Esophagus muscularis mucosa (tissue), 4 donors: ENCODE measurements at regions of chr5 and their contacts with region 1.

Region 1: DNA sequence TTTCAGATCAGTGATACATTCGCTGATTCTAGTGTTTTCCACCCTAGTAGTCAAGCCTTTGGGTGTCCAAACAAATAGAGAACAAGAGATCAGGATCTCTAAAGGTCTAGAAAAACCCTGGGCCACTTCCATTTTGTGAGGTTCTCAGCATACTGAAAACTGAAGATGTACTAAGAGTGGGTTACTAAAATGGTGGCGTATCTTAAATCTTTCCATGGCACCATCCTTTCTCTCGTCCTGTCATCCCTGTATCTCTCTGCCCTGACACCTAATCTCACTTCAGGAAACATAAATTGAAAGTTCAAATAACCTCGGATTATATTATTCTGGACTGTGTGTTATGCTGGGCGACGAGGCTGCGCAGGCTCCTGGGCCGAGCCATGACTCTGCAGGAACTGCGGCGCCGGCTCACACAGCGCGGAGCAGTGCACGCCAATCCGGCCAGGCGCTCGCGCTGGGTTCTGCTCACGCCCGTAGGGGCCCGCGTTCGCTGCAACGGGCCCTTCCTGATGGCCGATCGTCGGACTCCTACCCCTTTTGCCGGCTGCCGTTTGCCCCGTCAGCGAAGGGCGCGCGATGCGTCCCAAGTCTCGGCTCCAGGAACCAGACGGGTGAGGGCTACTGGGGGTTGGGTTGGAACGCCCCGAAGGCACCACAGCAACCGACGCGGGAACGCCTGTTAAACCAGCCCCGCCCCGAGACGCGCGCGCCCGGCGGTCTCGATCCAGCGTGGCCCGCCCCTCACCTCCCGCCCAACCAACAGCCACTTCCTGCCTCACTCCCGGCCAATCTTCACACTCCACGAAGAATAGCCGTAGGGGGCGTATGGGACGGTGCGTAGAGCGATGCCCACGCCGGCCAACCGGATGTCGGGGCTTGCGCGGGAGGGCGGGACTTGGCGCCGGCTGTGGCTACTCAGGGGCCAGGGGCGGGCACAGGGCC is 503 bp upstream of the CANX start:
- DNase-seq: peak; percentile 100
- H3K4me3 ChIP-seq: peak overlapping the region; percentile 86 to 94 (median 88)
- H3K27ac ChIP-seq: peak overlapping the region; percentile 93 to 97 (median 96)
- H3K4me1 ChIP-seq: peaks cover 27 to 54% (median 45%) of the 10 kb centered on the region in 4 donors
- H3K27me3 ChIP-seq: no peaks in the 10 kb centered on the region
- CTCF ChIP-seq: no peak
- EP300 ChIP-seq: no peak
- POLR2A ChIP-seq: peak; percentile 91

Region 2: DNA sequence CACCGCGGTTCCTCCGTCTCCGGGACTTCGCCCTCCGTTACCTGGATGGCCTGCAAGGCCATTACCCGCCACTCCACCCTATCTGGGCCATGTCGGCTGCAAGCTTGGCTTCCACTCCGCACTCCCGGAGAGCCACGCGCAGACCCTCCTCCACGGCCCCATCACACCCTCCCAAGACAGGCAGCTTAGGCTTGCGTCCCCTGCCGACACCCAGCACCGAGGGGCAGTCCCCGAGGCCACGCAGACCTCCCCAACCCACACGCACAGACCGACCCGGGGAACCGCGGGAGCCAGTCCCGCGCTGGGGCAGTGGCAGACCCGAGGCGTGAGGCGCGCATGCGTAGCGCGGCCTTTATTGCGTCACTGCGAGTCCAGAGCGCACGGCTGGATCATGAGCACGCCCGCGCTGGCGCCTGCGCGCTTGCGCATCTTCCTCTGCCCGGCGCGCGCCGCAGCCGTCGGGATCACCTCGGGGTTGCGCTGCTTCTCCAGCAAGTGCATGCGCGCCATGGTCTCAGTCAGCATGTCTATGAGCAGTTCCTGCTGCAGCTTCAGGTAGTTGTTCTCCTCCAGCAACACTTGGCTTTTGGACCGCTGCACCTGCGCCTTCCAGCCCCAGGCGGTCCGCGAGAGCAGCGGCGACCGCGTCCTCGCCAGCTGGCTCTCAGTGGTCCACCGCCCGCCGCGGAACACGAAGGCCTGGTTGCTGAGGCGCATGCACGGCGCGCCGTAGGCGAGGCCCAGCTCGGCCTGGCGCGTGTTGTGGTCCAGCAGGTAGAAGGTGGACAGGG is 19.8 kb before region 1 on chr5:
- intact Hi-C with region 1: loop called (anchors 2 kb)
- DNase-seq: peak; percentile 98
- H3K4me3 ChIP-seq: peak overlapping the region; percentile 69 to 95 (median 84)
- H3K27ac ChIP-seq: peak overlapping the region; percentile 90 to 96 (median 92)
- H3K4me1 ChIP-seq: peaks cover 15 to 32% (median 29%) of the 10 kb centered on the region in 4 donors
- H3K27me3 ChIP-seq: no peaks in the 10 kb centered on the region
- CTCF ChIP-seq: peak in 1 of 3 experiments; percentile 40
- EP300 ChIP-seq: no peak
- POLR2A ChIP-seq: peak; percentile 84

Region 3: DNA sequence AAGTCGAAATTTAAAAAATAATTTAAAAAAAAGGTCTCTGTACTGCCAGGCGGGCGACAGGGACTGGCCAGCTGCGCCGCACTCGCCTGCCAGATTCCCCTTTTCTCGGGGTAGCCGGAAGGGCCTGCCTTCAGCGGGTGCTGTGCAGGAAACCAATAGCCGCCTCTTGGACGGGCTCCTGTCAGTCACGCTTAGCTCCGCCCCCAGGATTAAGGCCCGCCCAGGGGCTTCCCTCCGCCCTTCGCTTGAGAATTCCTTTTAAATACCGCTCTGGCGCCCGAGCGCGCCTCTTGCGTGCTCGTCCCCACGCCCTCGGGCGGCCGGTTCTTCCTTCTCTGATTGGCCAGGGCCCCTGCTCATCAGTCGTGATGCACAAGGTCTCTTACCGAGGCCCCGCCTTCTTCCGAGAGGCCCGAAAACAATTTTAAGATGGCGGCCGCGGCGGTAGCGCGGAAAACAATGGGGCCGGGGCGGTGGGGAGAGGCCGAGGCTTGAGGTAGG is 34.2 kb after region 1 on chr5 and contains the start of gene MAML1:
- intact Hi-C with region 1: loop called (anchors 5 kb)
- DNase-seq: peak; percentile 100
- H3K4me3 ChIP-seq: peak within 1 kb of the TSS; percentile 91 to 100 (median 96)
- H3K27ac ChIP-seq: peak within 1 kb of the TSS; percentile 97 to 100 (median 98)
- H3K4me1 ChIP-seq: peaks cover 39 to 52% (median 50%) of the 10 kb centered on the region in 4 donors
- H3K27me3 ChIP-seq: no peaks in the 10 kb centered on the region
- CTCF ChIP-seq: no peak
- EP300 ChIP-seq: no peak
- POLR2A ChIP-seq: no peak
- total RNA-seq, gene MAML1: 21.4 to 60.9 (median 36.4) TPM